GM10248 (cell line): ENCODE measurements at regions of chrX and their contacts with region 1.

Region 1: GRCh38 chrX:47144626-47145394 is at the starts of genes NDUFB11 and RBM10:
- DNase-seq: peak; percentile 88
- CTCF ChIP-seq: peak; percentile 26

Region 2: GRCh38 chrX:47158131-47158530 is 13.3 kb after region 1 on chrX:
- CTCF ChIA-PET with region 1: interaction called, 10 read pairs
- POLR2A ChIA-PET with region 1: interaction called, 3 read pairs
- DNase-seq: no peak
- CTCF ChIP-seq: no peak